ENCODE measurements at regions of chr2 and their contacts with region 1.

Region 1: GRCh38 chr2:207632575-207633493 is 7.6 kb upstream of the METTL21A start:
- DNase-seq: peak; percentile 86
- H3K4me3 ChIP-seq: no peak overlapping the region
- H3K27ac ChIP-seq: peak overlapping the region; percentile 75
- H3K4me1 ChIP-seq: peaks cover 37% of the 10 kb centered on the region
- H3K27me3 ChIP-seq: no peaks in the 10 kb centered on the region
- CTCF ChIP-seq: no peak

Region 2: DNA sequence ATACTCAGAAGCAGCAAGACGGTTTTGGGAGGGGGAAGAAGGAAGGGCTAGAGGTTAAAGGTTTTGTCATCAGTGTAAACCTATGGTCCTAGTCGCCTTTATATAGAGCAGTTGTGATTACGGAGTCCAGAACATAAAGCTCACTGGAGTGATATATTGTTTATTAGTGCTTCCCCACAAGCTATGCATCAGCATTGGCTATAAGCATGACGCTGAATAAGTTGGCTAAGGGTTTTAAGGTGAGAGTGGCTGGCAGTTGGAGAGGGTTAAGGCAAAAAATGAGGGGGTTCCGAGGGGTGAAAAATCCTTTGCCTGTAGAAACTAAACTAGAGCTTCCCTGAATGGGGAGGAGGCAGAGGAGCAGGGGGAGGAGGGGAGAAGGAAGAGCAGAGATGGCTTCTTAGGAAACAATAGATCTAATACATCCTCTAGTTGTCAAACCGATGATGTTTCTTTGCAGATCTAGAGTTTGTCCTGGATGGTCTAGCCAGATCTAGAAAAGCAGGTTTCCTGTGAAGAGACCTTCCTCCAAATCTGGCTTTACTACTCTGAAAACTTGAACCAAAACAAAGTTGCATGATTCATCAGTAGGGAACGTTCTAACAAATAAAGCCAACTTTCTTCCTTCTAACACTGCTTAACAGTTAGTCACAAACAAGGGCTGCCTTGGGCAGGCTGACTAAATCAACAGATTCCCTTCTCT is 469.6 kb before region 1 on chr2:
- CTCF ChIA-PET with region 1: no interaction called
- dilution Hi-C with region 1: no loop called
- in situ Hi-C with region 1: no loop called
- intact Hi-C with region 1: no loop called
- DNase-seq: peak; percentile 94
- H3K4me3 ChIP-seq: peak overlapping the region; percentile 71 to 97 (median 74)
- H3K27ac ChIP-seq: peak overlapping the region; percentile 89
- H3K4me1 ChIP-seq: peaks cover 44% of the 10 kb centered on the region
- H3K27me3 ChIP-seq: no peaks in the 10 kb centered on the region
- CTCF ChIP-seq: no peak

Region 3: DNA sequence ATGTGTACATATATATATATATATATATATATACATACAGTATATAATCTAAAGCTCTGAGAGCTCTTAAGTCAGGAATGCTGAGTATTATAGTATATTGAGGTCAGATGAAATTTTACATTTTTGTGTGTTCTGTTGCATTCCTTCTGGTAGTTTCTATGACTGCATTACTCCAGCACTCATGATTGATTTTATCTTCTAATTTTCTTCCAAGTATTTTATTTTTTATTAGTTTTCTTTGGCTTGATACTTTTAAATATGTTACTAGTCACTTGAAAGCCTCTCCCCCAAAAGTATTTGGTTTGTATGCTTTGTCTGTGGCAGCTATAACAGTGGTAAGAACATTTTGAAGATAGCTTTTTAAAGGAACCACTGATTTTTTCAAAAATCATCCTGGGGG is 32.6 kb before region 1 on chr2:
- CTCF ChIA-PET with region 1: no interaction called
- dilution Hi-C with region 1: no loop called
- in situ Hi-C with region 1: no loop called
- intact Hi-C with region 1: no loop called
- DNase-seq: no peak
- H3K4me3 ChIP-seq: no peak overlapping the region
- H3K27ac ChIP-seq: no peak overlapping the region
- H3K4me1 ChIP-seq: no peaks in the 10 kb centered on the region
- H3K27me3 ChIP-seq: no peaks in the 10 kb centered on the region
- CTCF ChIP-seq: no peak

Region 4: DNA sequence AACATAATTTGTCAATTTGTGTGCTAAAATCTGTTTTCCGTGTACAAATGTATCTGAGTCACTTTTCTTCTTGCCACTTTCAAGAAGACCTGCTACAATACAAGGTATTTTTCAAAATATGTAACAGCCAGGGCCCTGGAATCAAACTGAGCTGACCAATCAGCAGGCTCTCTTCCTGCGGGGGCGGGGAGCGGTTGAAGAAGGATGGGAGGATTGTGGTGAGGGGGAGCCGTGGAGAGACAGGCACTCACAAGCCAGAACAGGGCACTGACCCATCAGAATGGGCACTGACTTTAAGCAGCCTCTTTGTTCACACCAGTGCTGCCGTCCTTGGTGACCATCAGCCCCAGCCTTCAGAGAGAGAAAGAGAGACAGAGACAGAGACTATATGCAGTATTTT is 38.1 kb after region 1 on chr2:
- CTCF ChIA-PET with region 1: no interaction called
- dilution Hi-C with region 1: loop called (anchors 5 kb)
- in situ Hi-C with region 1: no loop called
- intact Hi-C with region 1: no loop called
- DNase-seq: no peak
- H3K4me3 ChIP-seq: no peak overlapping the region
- H3K27ac ChIP-seq: no peak overlapping the region
- H3K4me1 ChIP-seq: no peaks in the 10 kb centered on the region
- H3K27me3 ChIP-seq: no peaks in the 10 kb centered on the region
- CTCF ChIP-seq: no peak

Region 5: GRCh38 chr2:207710814-207711740 is 78.2 kb after region 1 on chr2 and contains the start of gene CCNYL1:
- CTCF ChIA-PET with region 1: no interaction called
- dilution Hi-C with region 1: no loop called
- in situ Hi-C with region 1: loop called (anchors 10 kb)
- intact Hi-C with region 1: loop called (anchors 2 kb)
- DNase-seq: peak; percentile 99
- H3K4me3 ChIP-seq: peak within 1 kb of the TSS; percentile 88 to 93 (median 91)
- H3K27ac ChIP-seq: peak within 1 kb of the TSS; percentile 73
- H3K4me1 ChIP-seq: peaks cover 27% of the 10 kb centered on the region
- H3K27me3 ChIP-seq: no peaks in the 10 kb centered on the region
- CTCF ChIP-seq: peak in 1 of 2 donors; percentile 13
- total RNA-seq, gene CCNYL1: 11.2 to 30.0 TPM